PC-9 (cell line): ENCODE measurements at regions of chr9 and their contacts with region 1.

Region 1: GRCh38 chr9:35452481-35452880 is 37.4 kb upstream of the RUSC2 start:
- DNase-seq: no peak
- H3K4me3 ChIP-seq: no peak overlapping the region
- H3K27ac ChIP-seq: no peak overlapping the region
- H3K4me1 ChIP-seq: no peaks in the 10 kb centered on the region
- H3K27me3 ChIP-seq: peaks cover 23% of the 10 kb centered on the region
- CTCF ChIP-seq: no peak

Region 2: DNA sequence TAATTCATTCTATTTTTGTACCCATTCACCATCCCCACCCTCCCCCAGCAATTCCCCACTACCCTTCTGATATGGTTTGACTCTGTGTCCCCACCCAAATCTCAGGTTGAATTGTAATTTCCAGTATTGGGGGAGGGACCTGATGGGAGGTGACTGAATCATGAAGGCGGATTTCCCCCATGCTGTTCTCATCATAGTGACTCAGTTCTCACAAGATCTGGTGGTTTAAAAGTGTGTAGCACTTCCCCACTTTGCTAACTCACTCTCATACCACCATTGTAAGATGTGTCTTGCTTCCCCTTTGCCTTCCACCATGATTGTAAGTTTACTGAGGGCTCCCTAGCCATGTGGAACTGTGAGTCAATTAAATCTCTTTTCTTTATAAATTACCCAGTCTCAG is 126.6 kb after region 1 on chr9:
- CTCF ChIA-PET with region 1: no interaction called
- POLR2A ChIA-PET with region 1: interaction called, 28 read pairs
- intact Hi-C with region 1: no loop called
- DNase-seq: no peak
- H3K4me3 ChIP-seq: no peak overlapping the region
- H3K27ac ChIP-seq: no peak overlapping the region
- H3K4me1 ChIP-seq: no peaks in the 10 kb centered on the region
- H3K27me3 ChIP-seq: no peaks in the 10 kb centered on the region
- CTCF ChIP-seq: no peak